Aorta (tissue), 5 donors: ENCODE measurements at regions of chr19 and their contacts with region 1.

Region 1: DNA sequence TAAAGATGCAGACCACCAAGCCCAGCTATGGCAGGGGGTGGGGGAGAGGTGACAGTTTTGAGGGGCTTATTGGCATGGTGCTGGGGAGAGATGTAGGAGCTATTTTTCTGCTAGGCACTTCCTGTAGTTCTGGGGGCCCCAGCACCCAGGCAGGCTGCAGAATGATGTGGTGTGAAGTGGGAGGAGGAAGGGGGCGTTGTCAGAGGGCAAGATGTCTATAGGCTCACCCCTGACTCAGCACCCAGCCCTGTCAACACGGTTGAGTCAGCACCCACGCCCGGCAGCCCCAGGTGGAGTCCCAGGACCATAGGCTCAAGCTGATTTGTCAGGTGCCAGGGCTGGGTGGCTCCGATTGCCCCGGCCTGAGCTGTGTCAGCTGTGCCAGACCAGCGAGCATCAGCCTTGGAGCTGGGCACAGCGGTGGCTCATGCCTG is 5.8 kb downstream of the KLF2 start:
- DNase-seq: peak; percentile 84 to 94
- ATAC-seq: peak; percentile 17
- H3K4me3 ChIP-seq: no peak overlapping the region
- H3K27ac ChIP-seq: no peak overlapping the region
- H3K4me1 ChIP-seq: no peaks in the 10 kb centered on the region
- H3K27me3 ChIP-seq: no peaks in the 10 kb centered on the region

Region 2: DNA sequence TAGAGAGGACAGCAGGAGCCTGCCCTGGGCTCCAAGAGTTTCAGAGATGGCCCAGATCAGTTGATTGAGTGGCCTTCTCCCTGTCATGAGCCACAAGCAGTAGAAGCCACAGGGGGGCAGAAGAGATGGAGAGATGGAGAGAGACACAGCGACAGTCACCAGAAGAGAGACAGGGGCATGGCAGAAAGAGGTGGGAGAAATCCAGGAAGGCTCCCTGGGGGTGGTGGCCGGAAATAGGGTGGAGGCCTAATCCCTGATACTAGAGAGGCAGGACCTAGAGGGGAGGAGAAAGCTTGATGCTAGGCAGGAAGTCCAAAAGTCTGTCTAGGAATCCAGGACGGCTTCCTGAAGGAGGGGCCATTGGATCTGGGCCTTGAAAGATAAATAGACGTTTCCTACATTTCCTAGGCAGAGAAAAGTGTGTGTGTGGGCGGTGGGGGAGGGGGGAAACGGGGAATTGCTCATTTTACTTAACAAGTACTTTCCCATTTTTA is 263.7 kb before region 1 on chr19:
- intact Hi-C with region 1: loop called (anchors 5 kb)
- DNase-seq: peak in 1 of 2 donors; percentile 49
- ATAC-seq: no peak
- H3K4me3 ChIP-seq: no peak overlapping the region
- H3K27ac ChIP-seq: peak overlapping the region; percentile 68 to 90
- H3K4me1 ChIP-seq: no peaks in the 10 kb centered on the region
- H3K27me3 ChIP-seq: no peaks in the 10 kb centered on the region